Right ventricle myocardium superior (tissue), 1 donor: ENCODE measurements at regions of chr14 and their contacts with region 1.

Region 1: DNA sequence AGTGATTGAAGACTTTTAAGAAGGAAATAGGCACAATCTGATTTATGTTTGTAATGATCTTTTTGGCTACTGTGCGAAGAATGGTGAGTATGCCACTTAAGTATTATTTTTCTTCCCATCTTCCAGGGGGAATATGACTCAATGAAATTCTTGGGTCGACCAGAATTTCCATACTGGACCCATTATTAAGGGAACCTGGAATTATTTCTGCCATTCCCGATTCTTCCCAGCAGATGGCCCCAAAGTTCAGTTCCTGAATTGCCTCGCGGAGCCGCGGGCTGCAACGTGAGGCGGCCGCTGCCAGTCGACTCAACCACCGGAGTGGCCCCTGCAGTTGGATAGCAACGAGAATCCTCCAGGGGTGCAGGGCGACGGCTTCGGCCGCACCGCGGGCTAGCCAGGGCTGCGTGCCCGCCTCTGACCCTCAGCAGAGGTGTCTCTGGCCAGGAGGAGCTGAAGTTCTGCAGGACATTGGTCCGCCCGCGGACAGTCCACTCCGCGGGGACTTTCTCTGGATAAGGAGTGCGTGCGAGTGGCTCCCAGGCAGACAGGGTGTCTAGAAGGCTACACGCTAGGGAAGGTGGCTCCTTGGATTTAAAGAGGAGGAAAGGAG is 628 bp upstream of the TSHR start:
- DNase-seq: peak; percentile 87
- ATAC-seq: peak; percentile 96

Region 2: DNA sequence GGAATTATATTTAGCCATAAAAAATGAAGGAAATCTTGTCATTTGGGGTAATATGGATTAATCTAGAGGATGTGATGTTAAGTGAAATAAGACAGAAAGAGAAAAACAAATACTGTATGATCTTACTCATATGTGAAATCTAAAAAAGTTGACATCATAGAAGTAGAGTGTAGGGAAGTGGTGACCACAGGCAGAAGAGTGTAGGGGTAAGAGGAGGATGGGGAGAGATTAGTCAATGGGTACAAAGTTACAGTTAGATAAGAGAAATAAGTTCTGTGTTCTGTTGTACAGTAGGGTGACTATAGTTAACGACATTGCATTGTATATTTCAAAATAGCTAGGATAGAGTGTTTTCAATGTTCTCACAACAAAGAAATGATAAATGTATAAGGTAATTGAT is 87.6 kb after region 1 on chr14:
- intact Hi-C with region 1: no loop called
- DNase-seq: no peak
- ATAC-seq: no peak

Region 3: GRCh38 chr14:81170104-81170828 is 215.5 kb after region 1 on chr14:
- intact Hi-C with region 1: loop called (anchors 10 kb)
- DNase-seq: peak; percentile 97
- ATAC-seq: peak; percentile 100